Head of caudate nucleus (tissue), 42 donors: ENCODE measurements at regions of chr17 and their contacts with region 1.

Region 1: DNA sequence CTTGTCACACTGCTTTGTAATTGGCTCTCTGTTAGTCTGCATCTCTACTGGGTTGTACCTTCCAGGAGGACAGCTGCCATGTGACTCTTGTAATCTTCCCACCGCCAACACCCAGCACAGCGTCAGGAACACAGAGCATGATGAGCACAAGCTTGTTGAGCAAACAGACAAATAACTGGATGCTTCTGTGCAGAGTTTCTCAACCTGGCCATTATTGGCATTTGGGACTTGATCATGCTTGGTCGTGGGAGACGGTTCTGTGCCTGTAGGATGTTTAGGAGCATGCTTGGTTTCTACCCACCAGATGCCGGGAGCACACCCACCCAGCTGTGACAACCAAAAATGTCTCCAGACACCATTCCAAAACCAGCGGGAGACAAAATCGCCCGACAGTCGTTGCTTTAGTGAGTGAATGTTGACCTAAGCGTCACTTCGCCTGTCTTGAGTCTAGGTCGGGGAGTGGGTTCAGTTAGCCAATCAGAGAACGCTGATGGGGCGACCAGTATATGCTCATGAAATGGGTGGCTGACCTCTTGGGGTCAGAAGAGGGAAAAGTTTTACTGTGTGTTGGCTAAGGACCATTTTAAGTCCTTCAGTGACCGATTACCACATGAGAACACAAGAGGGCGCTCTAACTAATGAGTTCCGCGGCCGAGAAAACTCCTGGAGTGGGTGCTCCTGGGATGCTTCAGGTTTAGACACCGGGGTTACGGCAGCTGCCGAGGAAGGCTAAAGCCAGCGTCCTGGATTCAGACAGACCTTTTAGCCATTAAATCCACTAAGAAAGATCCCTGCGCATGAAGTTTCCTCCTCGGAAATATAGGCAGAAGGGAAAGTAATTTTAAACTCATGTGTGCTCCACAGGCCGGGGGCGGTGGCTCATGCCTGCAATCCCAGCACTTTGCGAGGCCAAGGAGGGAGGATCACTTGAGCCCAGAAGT is 57.8 kb upstream of the TEX2 start:
- DNase-seq: peak; percentile 24 to 85 (median 64)

Region 2: GRCh38 chr17:64418506-64419339 is 97.8 kb after region 1 on chr17:
- intact Hi-C with region 1: loop called (anchors 5 kb)
- DNase-seq: peak in 8 of 42 donors; percentile 15 to 64 (median 23)

Region 3: DNA sequence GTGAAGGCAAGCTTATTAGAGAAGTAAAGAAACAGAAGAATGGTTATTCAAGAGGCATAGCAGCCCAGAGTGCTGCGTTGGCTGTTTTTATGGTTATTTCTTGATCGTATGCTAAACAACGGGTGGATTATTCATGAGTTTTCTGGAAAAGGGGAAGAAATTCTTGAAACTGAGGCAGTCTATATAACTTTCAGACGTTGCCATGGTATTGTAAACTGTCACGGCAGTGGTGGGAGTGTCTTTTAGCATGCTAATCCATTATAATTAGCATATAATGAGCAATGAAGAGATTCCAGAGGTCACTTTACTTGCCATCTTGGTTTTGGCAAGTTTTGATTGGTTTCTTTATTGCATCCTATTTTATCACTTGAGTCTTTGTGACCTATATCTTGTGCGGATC is 110.7 kb after region 1 on chr17:
- intact Hi-C with region 1: no loop called
- DNase-seq: no peak